ENCODE measurements at regions of chr7 and their contacts with region 1.

Region 1: GRCh38 chr7:136717910-136718557 is 150.4 kb upstream of the CHRM2 start:
- DNase-seq: no peak
- H3K4me3 ChIP-seq: no peak overlapping the region
- H3K27ac ChIP-seq: no peak overlapping the region
- H3K4me1 ChIP-seq: no peaks in the 10 kb centered on the region
- H3K27me3 ChIP-seq: no peaks in the 10 kb centered on the region
- CTCF ChIP-seq: no peak
- EP300 ChIP-seq: no peak
- POLR2A ChIP-seq: no peak

Region 2: GRCh38 chr7:136424058-136424457 is 294.0 kb before region 1 on chr7:
- intact Hi-C with region 1: loop called in 1 of 4 experiments (anchors 10 kb)
- DNase-seq: no peak
- H3K4me3 ChIP-seq: no peak overlapping the region
- H3K27ac ChIP-seq: no peak overlapping the region
- H3K4me1 ChIP-seq: no peaks in the 10 kb centered on the region
- H3K27me3 ChIP-seq: no peaks in the 10 kb centered on the region
- CTCF ChIP-seq: no peak
- EP300 ChIP-seq: no peak
- POLR2A ChIP-seq: no peak

Region 3: GRCh38 chr7:136702913-136703312 is 15.1 kb before region 1 on chr7:
- intact Hi-C with region 1: loop called in 1 of 4 experiments (anchors 1 kb)
- DNase-seq: no peak
- H3K4me3 ChIP-seq: no peak overlapping the region
- H3K27ac ChIP-seq: no peak overlapping the region
- H3K4me1 ChIP-seq: no peaks in the 10 kb centered on the region
- H3K27me3 ChIP-seq: no peaks in the 10 kb centered on the region
- CTCF ChIP-seq: no peak
- EP300 ChIP-seq: no peak
- POLR2A ChIP-seq: no peak